ENCODE measurements at regions of chr6 and their contacts with region 1.

Region 1: GRCh38 chr6:43723737-43724295 is 36.2 kb upstream of the MRPS18A start:
- DNase-seq: peak; percentile 49 to 85
- H3K4me3 ChIP-seq: no peak overlapping the region
- H3K27ac ChIP-seq: no peak overlapping the region
- H3K4me1 ChIP-seq: peaks cover 0 to 8% (median 0%) of the 10 kb centered on the region in 4 experiments; a peak in 4 of 7 replicates
- H3K27me3 ChIP-seq: no peaks in the 10 kb centered on the region
- CTCF ChIP-seq: peak; percentile 77 to 82 (median 81)
- EP300 ChIP-seq: no peak
- POLR2A ChIP-seq: no peak
- RAD21 ChIP-seq: peak; percentile 89

Region 2: DNA sequence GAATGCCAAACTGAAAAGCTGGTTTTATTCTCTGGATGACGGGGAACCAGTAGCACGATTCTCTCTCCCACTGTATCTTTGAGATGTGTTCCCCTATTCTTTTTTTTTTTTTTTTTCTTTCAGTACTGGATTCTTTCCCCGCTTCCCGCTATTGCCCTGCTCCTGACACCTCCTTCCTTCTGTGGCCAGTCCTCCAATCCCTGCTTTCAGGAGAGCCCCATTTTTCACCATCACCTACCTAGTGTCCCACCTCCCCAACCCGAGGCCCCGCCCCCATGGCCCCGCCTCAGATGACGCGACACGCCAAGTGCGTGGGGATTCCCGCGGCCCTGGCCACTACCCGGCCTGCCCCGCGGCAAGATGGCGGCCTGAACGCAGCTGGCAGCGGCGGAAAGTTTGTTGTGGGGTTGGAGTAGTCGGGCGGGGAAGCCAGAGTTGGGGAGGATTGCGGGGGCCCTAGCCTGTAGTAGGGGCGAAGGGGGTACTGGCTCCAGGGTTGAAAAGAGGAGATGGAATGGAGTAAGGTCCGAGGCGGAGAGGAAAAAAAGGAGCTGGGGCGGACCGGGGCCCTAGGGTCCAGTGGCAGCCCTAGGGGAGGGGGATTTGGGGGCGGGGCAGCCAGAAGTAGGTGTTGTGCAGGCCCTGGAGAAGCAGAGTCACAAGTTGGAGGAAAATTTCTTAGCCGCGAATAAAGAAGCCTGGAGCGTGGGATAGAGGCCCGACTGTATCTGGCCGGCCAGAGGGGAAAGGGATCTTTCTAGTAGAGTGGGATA is 246.4 kb before region 1 on chr6 and contains the start of gene TJAP1:
- CTCF ChIA-PET with region 1: no interaction called
- POLR2A ChIA-PET with region 1: no interaction called
- DNase-seq: peak; percentile 67 to 100
- H3K4me3 ChIP-seq: peak within 1 kb of the TSS; percentile 43 to 79 (median 57)
- H3K27ac ChIP-seq: peak within 1 kb of the TSS; percentile 70
- H3K4me1 ChIP-seq: peaks cover 4 to 14% (median 12%) of the 10 kb centered on the region in 4 experiments; a peak in 6 of 7 replicates
- H3K27me3 ChIP-seq: no peaks in the 10 kb centered on the region
- CTCF ChIP-seq: no peak
- EP300 ChIP-seq: peak in 1 of 2 experiments; percentile 69; a peak in 2 of 3 replicates
- POLR2A ChIP-seq: peak; percentile 92 to 97
- RAD21 ChIP-seq: no peak
- total RNA-seq, gene TJAP1: 36.8 and 40.4 TPM in 2 replicates

Region 3: GRCh38 chr6:43600595-43600994 is 123.2 kb before region 1 on chr6:
- CTCF ChIA-PET with region 1: no interaction called
- POLR2A ChIA-PET with region 1: no interaction called
- DNase-seq: no peak
- H3K4me3 ChIP-seq: no peak overlapping the region
- H3K27ac ChIP-seq: no peak overlapping the region
- H3K4me1 ChIP-seq: no peaks in the 10 kb centered on the region
- H3K27me3 ChIP-seq: no peaks in the 10 kb centered on the region
- CTCF ChIP-seq: no peak
- EP300 ChIP-seq: no peak
- POLR2A ChIP-seq: no peak
- RAD21 ChIP-seq: no peak

Region 4: GRCh38 chr6:43739642-43740091 is 15.9 kb after region 1 on chr6:
- CTCF ChIA-PET with region 1: interaction called, 20 read pairs
- POLR2A ChIA-PET with region 1: interaction called, 3 read pairs
- DNase-seq: no peak
- H3K4me3 ChIP-seq: no peak overlapping the region
- H3K27ac ChIP-seq: no peak overlapping the region
- H3K4me1 ChIP-seq: peaks cover 0 to 20% (median 3%) of the 10 kb centered on the region in 4 experiments; a peak in 4 of 7 replicates
- H3K27me3 ChIP-seq: no peaks in the 10 kb centered on the region
- CTCF ChIP-seq: no peak
- EP300 ChIP-seq: no peak
- POLR2A ChIP-seq: no peak
- RAD21 ChIP-seq: no peak

Region 5: GRCh38 chr6:43746613-43747102 is 22.8 kb after region 1 on chr6:
- CTCF ChIA-PET with region 1: interaction called, 20 read pairs
- POLR2A ChIA-PET with region 1: no interaction called
- DNase-seq: peak in 1 of 2 experiments; percentile 42
- H3K4me3 ChIP-seq: no peak overlapping the region
- H3K27ac ChIP-seq: no peak overlapping the region
- H3K4me1 ChIP-seq: peaks cover 0 to 10% (median 3%) of the 10 kb centered on the region in 4 experiments; a peak in 4 of 7 replicates
- H3K27me3 ChIP-seq: no peaks in the 10 kb centered on the region
- CTCF ChIP-seq: no peak
- EP300 ChIP-seq: no peak
- POLR2A ChIP-seq: no peak
- RAD21 ChIP-seq: no peak

Region 6: DNA sequence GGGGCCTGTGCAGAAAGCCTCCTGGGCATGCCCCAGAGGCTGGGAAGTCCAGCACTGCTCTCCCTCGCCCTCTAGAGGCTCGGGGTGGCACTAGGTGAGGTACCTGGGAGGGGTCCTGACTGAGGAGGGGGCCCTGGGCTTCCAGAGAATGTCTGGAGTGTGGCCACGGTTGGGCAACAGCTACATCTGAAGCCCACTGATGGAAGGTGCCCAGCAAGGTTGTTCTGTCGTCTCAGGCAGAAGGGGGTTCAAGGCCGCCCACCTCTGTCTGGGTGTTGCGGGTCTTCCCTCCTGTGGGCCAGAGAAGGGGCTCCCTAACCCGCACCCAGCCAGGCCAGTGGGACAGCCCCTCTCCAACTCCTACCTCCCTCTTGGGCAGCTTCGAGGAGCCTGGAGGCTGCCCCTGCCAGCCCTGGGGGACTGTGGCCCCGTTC is 34.8 kb after region 1 on chr6:
- CTCF ChIA-PET with region 1: interaction called, 89 read pairs
- POLR2A ChIA-PET with region 1: interaction called, 3 read pairs
- DNase-seq: peak in 1 of 2 experiments; percentile 91
- H3K4me3 ChIP-seq: no peak overlapping the region
- H3K27ac ChIP-seq: no peak overlapping the region
- H3K4me1 ChIP-seq: peaks cover 0 to 9% (median 5%) of the 10 kb centered on the region in 4 experiments; a peak in 5 of 7 replicates
- H3K27me3 ChIP-seq: no peaks in the 10 kb centered on the region
- CTCF ChIP-seq: peak; percentile 87 to 95 (median 94)
- EP300 ChIP-seq: no peak
- POLR2A ChIP-seq: no peak
- RAD21 ChIP-seq: peak; percentile 81 to 88